Activated naive CD4-positive, alpha-beta T cell treated with anti-CD3 and anti-CD28 coated beads for 36 hours (primary cell): ENCODE measurements at regions of chr9 and their contacts with region 1.

Region 1: GRCh38 chr9:129823935-129824601 is at the start of gene TOR1A:
- DNase-seq: peak; percentile 96
- H3K4me3 Mint-ChIP-seq: peak within 1 kb of the TSS; percentile 79
- H3K27ac Mint-ChIP-seq: peak within 1 kb of the TSS; percentile 77
- H3K4me1 Mint-ChIP-seq: peaks cover 13% of the 10 kb centered on the region
- H3K27me3 Mint-ChIP-seq: no peaks in the 10 kb centered on the region
- total RNA-seq, gene TOR1A: 26.2 to 28.2 TPM

Region 2: DNA sequence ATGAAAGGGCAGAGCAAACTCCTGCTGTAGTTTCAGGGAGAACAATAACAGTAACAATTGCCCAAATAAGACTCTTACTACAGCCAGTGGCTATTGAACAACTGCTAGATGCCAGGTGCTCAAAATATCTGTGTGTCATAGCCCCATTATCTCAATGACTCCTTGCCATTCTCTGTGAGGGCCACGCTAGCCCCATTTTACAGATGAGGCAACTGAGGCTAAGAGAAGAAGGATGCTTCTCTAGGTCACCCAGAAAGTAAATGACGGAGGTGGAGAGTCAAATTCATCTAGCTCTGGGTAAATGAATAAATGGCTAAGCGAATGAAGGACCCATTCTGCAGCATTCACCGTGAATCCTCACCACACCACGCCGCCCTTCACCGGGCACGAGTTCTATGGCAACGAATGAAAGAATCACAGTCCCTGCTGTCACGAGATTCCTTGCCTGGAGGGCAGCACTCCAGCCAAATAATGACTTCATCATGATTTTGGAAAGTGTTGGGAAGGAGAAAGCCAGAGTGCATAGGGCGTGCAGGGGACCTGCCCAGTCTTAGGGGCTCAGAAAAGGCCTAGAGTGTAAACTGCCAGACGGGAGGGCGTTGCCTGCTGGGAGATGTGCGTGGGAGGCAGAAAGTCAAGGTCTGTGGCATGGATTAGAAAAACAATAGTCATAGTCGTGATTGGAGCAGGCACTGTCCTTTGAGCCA is 350.4 kb before region 1 on chr9:
- CTCF ChIA-PET with region 1: no interaction called
- intact Hi-C with region 1: no loop called
- DNase-seq: no peak
- H3K4me3 Mint-ChIP-seq: no peak overlapping the region
- H3K27ac Mint-ChIP-seq: no peak overlapping the region
- H3K4me1 Mint-ChIP-seq: peaks cover 13% of the 10 kb centered on the region
- H3K27me3 Mint-ChIP-seq: no peaks in the 10 kb centered on the region

Region 3: GRCh38 chr9:129868916-129869486 is 44.9 kb after region 1 on chr9:
- CTCF ChIA-PET with region 1: no interaction called
- intact Hi-C with region 1: loop called (anchors 5 kb)
- DNase-seq: peak; percentile 96
- H3K4me3 Mint-ChIP-seq: peak overlapping the region; percentile 66
- H3K27ac Mint-ChIP-seq: peak overlapping the region; percentile 91
- H3K4me1 Mint-ChIP-seq: peaks cover 72% of the 10 kb centered on the region
- H3K27me3 Mint-ChIP-seq: no peaks in the 10 kb centered on the region

Region 4: GRCh38 chr9:130156672-130157071 is 332.6 kb after region 1 on chr9:
- CTCF ChIA-PET with region 1: no interaction called
- intact Hi-C with region 1: no loop called
- DNase-seq: no peak
- H3K4me3 Mint-ChIP-seq: no peak overlapping the region
- H3K27ac Mint-ChIP-seq: no peak overlapping the region
- H3K4me1 Mint-ChIP-seq: peaks cover 9% of the 10 kb centered on the region
- H3K27me3 Mint-ChIP-seq: no peaks in the 10 kb centered on the region